ENCODE measurements at regions of chr17 and their contacts with region 1.

Region 1: GRCh38 chr17:45148183-45149036 is at the start of gene HEXIM1:
- DNase-seq: peak; percentile 97 to 100 (median 100)
- H3K4me3 ChIP-seq: peak within 1 kb of the TSS; percentile 91
- H3K4me3 Mint-ChIP-seq: peak within 1 kb of the TSS; percentile 90 to 99 (median 95)
- H3K27ac ChIP-seq: peak within 1 kb of the TSS; percentile 98
- H3K27ac Mint-ChIP-seq: peak within 1 kb of the TSS; percentile 97 to 100 (median 99)
- H3K4me1 ChIP-seq: peaks cover 43% of the 10 kb centered on the region
- H3K4me1 Mint-ChIP-seq: peaks cover 47 to 67% (median 61%) of the 10 kb centered on the region in 3 donors
- H3K27me3 ChIP-seq: no peaks in the 10 kb centered on the region
- H3K27me3 Mint-ChIP-seq: peaks cover 0 to 11% of the 10 kb centered on the region in 2 donors
- total RNA-seq, gene HEXIM1: 48.3 to 51.1 TPM

Region 2: DNA sequence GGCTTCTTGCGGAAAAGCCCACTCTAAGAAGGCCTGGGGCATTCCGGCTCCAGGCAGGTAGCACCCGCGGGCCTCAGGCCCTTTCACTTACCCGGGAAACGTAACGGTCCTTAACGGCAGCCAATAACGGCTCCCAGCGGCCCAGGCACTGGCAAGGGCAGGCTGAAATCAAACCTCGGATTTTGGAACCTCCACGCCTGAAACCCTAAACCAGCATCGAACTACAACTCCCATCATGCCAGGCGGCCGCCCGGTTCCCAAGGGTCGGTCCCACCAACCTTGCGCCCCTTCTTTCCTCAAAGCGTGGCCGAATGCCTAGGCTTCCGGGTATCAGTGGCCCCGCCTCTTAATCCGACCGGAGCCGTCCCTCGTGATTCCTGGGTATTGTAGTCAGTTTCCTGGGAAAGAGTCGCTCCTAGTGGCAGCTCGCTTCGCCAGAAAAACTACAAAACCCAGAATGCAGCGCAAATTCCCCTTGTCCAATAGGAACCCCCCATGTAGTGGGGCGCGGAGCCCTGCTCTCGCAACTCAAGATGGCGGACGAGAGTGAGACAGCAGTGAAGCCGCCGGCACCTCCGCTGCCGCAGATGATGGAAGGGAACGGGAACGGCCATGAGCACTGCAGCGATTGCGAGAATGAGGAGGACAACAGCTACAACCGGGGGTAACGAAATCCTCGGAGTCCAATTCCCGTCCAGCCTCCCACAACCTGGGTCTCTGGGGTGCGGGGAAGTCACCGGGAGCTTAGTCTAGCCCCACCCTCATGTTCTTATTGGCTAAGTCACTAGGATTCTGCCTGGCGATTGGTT is 87.4 kb before region 1 on chr17 and contains the start of gene NMT1:
- CTCF ChIA-PET with region 1: no interaction called
- POLR2A ChIA-PET with region 1: interaction called, 11 read pairs
- DNase-seq: peak; percentile 91 to 99 (median 97)
- H3K4me3 ChIP-seq: peak within 1 kb of the TSS; percentile 85
- H3K4me3 Mint-ChIP-seq: peak within 1 kb of the TSS; percentile 95 to 100 (median 99)
- H3K27ac ChIP-seq: peak within 1 kb of the TSS; percentile 84
- H3K27ac Mint-ChIP-seq: peak within 1 kb of the TSS; percentile 92 to 100 (median 99)
- H3K4me1 ChIP-seq: peaks cover 38% of the 10 kb centered on the region
- H3K4me1 Mint-ChIP-seq: peaks cover 35 to 62% (median 53%) of the 10 kb centered on the region in 3 donors
- H3K27me3 ChIP-seq: no peaks in the 10 kb centered on the region
- H3K27me3 Mint-ChIP-seq: peaks cover 0 to 2% of the 10 kb centered on the region in 2 donors
- total RNA-seq, gene NMT1: 189 to 198 TPM

Region 3: DNA sequence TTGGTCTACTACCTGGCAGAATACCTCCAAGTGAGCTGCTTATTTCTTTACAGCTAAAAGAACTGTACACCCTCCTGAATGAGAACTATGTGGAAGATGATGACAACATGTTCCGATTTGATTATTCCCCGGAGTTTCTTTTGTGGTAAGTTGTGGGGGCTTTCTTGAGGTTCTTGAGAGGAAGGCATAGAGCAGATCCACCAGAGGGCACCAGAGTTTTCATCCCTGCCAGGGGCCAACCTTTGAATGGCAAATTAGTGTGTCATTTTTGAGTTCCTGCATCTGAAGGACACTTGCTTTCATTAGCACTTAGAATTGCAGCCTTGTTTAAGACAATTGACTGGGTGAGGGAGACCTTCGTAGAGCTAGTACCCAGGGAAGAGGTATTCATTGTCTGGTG is 52.3 kb before region 1 on chr17:
- CTCF ChIA-PET with region 1: no interaction called
- POLR2A ChIA-PET with region 1: no interaction called
- DNase-seq: no peak
- H3K4me3 ChIP-seq: no peak overlapping the region
- H3K4me3 Mint-ChIP-seq: no peak overlapping the region
- H3K27ac ChIP-seq: no peak overlapping the region
- H3K27ac Mint-ChIP-seq: peak overlapping the region in 1 of 8 donors; percentile 80
- H3K4me1 ChIP-seq: no peaks in the 10 kb centered on the region
- H3K4me1 Mint-ChIP-seq: peaks cover 0 to 7% (median 2%) of the 10 kb centered on the region in 3 donors
- H3K27me3 ChIP-seq: no peaks in the 10 kb centered on the region
- H3K27me3 Mint-ChIP-seq: no peaks in the 10 kb centered on the region

Region 4: DNA sequence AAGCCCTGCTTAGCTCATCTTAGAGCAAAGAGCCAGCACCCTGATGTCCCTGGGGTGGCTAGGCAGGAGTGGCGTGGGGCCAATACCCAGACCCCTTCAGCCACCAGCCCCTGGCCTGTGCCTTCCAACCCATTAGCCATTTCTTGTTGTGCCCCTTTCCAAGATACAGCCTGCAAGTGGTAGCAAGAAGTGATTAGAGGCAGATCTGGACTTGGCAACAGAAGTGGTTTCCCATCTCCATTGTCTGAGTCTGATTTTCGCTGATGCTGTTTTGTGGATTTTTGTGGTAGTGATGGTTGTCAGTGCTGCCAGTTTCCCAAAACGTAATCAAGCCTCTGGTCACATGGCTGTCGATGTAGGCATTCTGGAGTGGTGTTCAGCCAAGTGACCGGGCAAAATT is 41.8 kb before region 1 on chr17:
- CTCF ChIA-PET with region 1: no interaction called
- POLR2A ChIA-PET with region 1: no interaction called
- DNase-seq: no peak
- H3K4me3 ChIP-seq: no peak overlapping the region
- H3K4me3 Mint-ChIP-seq: no peak overlapping the region
- H3K27ac ChIP-seq: no peak overlapping the region
- H3K27ac Mint-ChIP-seq: peak overlapping the region in 1 of 8 donors; percentile 81
- H3K4me1 ChIP-seq: no peaks in the 10 kb centered on the region
- H3K4me1 Mint-ChIP-seq: no peaks in the 10 kb centered on the region
- H3K27me3 ChIP-seq: no peaks in the 10 kb centered on the region
- H3K27me3 Mint-ChIP-seq: no peaks in the 10 kb centered on the region

Region 5: GRCh38 chr17:45172454-45173286 is 24.3 kb after region 1 on chr17:
- CTCF ChIA-PET with region 1: interaction called, 14 read pairs
- POLR2A ChIA-PET with region 1: interaction called, 18 read pairs
- DNase-seq: peak; percentile 10 to 68 (median 33)
- H3K4me3 ChIP-seq: peak overlapping the region; percentile 62
- H3K4me3 Mint-ChIP-seq: peak overlapping the region; percentile 51 to 81 (median 77)
- H3K27ac ChIP-seq: peak overlapping the region; percentile 0
- H3K27ac Mint-ChIP-seq: peak overlapping the region; percentile 60 to 98 (median 88)
- H3K4me1 ChIP-seq: peaks cover 23% of the 10 kb centered on the region
- H3K4me1 Mint-ChIP-seq: peaks cover 7 to 21% (median 9%) of the 10 kb centered on the region in 3 donors
- H3K27me3 ChIP-seq: no peaks in the 10 kb centered on the region
- H3K27me3 Mint-ChIP-seq: no peaks in the 10 kb centered on the region

Region 6: GRCh38 chr17:45228763-45229539 is 80.5 kb after region 1 on chr17:
- CTCF ChIA-PET with region 1: interaction called, 11 read pairs
- POLR2A ChIA-PET with region 1: interaction called, 26 read pairs
- DNase-seq: peak; percentile 78 to 91 (median 85)
- H3K4me3 ChIP-seq: peak overlapping the region; percentile 95
- H3K4me3 Mint-ChIP-seq: peak overlapping the region; percentile 96 to 100 (median 99)
- H3K27ac ChIP-seq: peak overlapping the region; percentile 98
- H3K27ac Mint-ChIP-seq: peak overlapping the region; percentile 97 to 100 (median 100)
- H3K4me1 ChIP-seq: peaks cover 75% of the 10 kb centered on the region
- H3K4me1 Mint-ChIP-seq: peaks cover 80 to 90% (median 83%) of the 10 kb centered on the region in 3 donors
- H3K27me3 ChIP-seq: no peaks in the 10 kb centered on the region
- H3K27me3 Mint-ChIP-seq: peaks cover 0 to 3% of the 10 kb centered on the region in 2 donors

Region 7: GRCh38 chr17:45270828-45271418 is 122.5 kb after region 1 on chr17:
- CTCF ChIA-PET with region 1: no interaction called
- POLR2A ChIA-PET with region 1: no interaction called
- DNase-seq: peak; percentile 30 to 62 (median 40)
- H3K4me3 ChIP-seq: no peak overlapping the region
- H3K4me3 Mint-ChIP-seq: no peak overlapping the region
- H3K27ac ChIP-seq: no peak overlapping the region
- H3K27ac Mint-ChIP-seq: peak overlapping the region in 1 of 8 donors; percentile 65
- H3K4me1 ChIP-seq: no peaks in the 10 kb centered on the region
- H3K4me1 Mint-ChIP-seq: no peaks in the 10 kb centered on the region
- H3K27me3 ChIP-seq: no peaks in the 10 kb centered on the region
- H3K27me3 Mint-ChIP-seq: no peaks in the 10 kb centered on the region

Region 8: GRCh38 chr17:45284176-45285140 is 136.0 kb after region 1 on chr17:
- CTCF ChIA-PET with region 1: no interaction called
- POLR2A ChIA-PET with region 1: no interaction called
- DNase-seq: no peak
- H3K4me3 ChIP-seq: no peak overlapping the region
- H3K4me3 Mint-ChIP-seq: no peak overlapping the region
- H3K27ac ChIP-seq: no peak overlapping the region
- H3K27ac Mint-ChIP-seq: peak overlapping the region in 6 of 8 donors; percentile 51 to 82 (median 62)
- H3K4me1 ChIP-seq: no peaks in the 10 kb centered on the region
- H3K4me1 Mint-ChIP-seq: peaks cover 4 to 10% (median 6%) of the 10 kb centered on the region in 3 donors
- H3K27me3 ChIP-seq: no peaks in the 10 kb centered on the region
- H3K27me3 Mint-ChIP-seq: no peaks in the 10 kb centered on the region

Region 9: DNA sequence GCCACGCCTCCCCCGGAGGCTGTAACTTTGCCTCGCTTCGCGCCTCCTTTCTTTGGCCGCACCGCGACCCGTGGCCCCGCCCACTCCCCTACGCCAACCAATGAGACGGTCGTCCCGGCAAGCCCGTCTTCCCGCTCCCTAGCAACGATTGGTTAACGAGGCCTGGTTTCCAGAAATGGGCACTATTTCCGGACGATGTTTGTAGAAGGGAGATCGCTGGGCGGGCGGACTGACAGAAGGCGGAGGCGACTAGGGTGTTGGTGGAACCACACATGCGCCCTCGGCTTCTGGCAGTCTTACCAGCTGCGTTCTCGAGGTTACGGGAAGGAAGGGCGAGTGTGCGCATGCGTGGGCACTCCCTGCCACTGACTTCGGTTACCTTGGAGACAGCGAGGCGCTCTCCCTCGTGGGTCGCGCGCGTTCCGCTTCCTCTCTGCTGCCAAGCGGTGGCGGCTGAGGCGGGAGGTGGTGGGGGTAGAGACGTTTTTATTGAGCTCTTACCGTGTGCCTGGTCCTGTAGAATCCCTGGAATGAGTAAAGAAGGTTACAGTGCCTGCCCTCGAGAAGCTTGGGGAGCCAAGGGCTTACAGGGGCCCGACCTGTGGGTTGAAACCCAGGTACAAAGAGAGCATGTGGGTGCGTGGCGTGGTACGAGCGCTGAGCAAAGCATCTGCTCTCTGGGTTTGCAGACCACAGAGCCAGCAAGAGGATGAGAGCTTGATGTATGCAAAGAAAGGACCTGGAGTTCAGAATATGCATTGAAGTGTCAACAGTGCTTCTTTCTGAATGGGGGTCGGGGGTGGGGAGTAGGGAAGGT is 168.9 kb after region 1 on chr17:
- CTCF ChIA-PET with region 1: interaction called, 18 read pairs
- POLR2A ChIA-PET with region 1: interaction called, 26 read pairs
- DNase-seq: peak; percentile 99 to 100 (median 100)
- H3K4me3 ChIP-seq: peak overlapping the region; percentile 81
- H3K4me3 Mint-ChIP-seq: peak overlapping the region; percentile 83 to 96 (median 90)
- H3K27ac ChIP-seq: peak overlapping the region; percentile 66
- H3K27ac Mint-ChIP-seq: peak overlapping the region; percentile 83 to 98 (median 94)
- H3K4me1 ChIP-seq: peaks cover 86% of the 10 kb centered on the region
- H3K4me1 Mint-ChIP-seq: peaks cover 75 to 89% (median 82%) of the 10 kb centered on the region in 3 donors
- H3K27me3 ChIP-seq: no peaks in the 10 kb centered on the region
- H3K27me3 Mint-ChIP-seq: peaks cover 0 to 3% of the 10 kb centered on the region in 2 donors